ENCODE measurements at regions of chr5 and their contacts with region 1.

Region 1: GRCh38 chr5:98349251-98349995 is 424.0 kb upstream of the RGMB start:
- DNase-seq: peak; percentile 86
- ATAC-seq: peak; percentile 84
- H3K4me3 ChIP-seq: no peak overlapping the region; the same call in 1 of the 2 replicates
- H3K27ac ChIP-seq: peak overlapping the region; percentile 66
- H3K4me1 ChIP-seq: peaks cover 4% of the 10 kb centered on the region; the same call in 1 of the 2 replicates
- H3K27me3 ChIP-seq: no peaks in the 10 kb centered on the region
- CTCF ChIP-seq: peak; percentile 83
- POLR2A ChIP-seq: peak; percentile 47
- RAD21 ChIP-seq: peak; percentile 95

Region 2: DNA sequence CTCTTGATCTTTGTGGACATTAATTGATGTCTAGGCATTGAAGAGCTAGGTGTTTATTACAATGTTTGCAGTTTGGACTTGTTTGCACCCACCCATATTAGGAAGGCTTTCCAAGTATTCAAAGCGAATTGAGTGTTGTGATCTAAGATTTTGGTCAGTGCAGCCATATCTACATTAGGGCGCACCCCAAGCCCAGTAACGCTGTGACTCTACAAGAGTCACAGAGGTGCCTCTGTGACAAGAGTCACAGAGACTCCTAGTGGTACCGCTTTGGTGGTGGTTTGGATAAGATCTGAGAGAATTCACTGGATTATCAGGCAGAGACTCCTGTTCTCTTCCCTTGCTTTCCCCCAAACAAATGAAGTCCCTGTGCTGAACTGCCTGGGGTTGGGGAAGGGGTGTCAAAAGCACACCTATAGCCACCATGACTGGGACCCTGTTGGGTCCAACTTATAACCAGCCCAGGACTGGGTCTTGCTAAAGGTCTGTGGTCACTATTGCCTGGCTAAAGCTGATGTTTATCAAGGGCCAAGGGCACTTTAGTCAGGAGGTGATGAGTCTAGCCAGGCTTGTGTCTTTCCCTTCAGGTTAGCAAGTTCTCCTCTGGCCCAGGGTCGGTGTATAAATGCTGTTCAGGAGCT is 1052.2 kb before region 1 on chr5:
- CTCF ChIA-PET with region 1: no interaction called
- POLR2A ChIA-PET with region 1: no interaction called
- dilution Hi-C with region 1: no loop called
- in situ Hi-C with region 1: no loop called
- intact Hi-C with region 1: loop called (anchors 1 kb)
- DNase-seq: peak; percentile 23
- ATAC-seq: peak; percentile 62
- H3K4me3 ChIP-seq: no peak overlapping the region
- H3K27ac ChIP-seq: no peak overlapping the region
- H3K4me1 ChIP-seq: no peaks in the 10 kb centered on the region; the same call in 1 of the 2 replicates
- H3K27me3 ChIP-seq: no peaks in the 10 kb centered on the region
- CTCF ChIP-seq: peak; percentile 54
- POLR2A ChIP-seq: no peak
- RAD21 ChIP-seq: peak; percentile 59

Region 3: GRCh38 chr5:97534166-97534565 is 815.3 kb before region 1 on chr5:
- CTCF ChIA-PET with region 1: no interaction called
- POLR2A ChIA-PET with region 1: no interaction called
- dilution Hi-C with region 1: no loop called
- in situ Hi-C with region 1: no loop called
- intact Hi-C with region 1: loop called (anchors 1 kb)
- DNase-seq: peak; percentile 94
- ATAC-seq: peak; percentile 98
- H3K4me3 ChIP-seq: no peak overlapping the region
- H3K27ac ChIP-seq: no peak overlapping the region
- H3K4me1 ChIP-seq: no peaks in the 10 kb centered on the region; the same call in 1 of the 2 replicates
- H3K27me3 ChIP-seq: peaks cover 12% of the 10 kb centered on the region
- CTCF ChIP-seq: peak; percentile 72
- POLR2A ChIP-seq: no peak
- RAD21 ChIP-seq: peak; percentile 73

Region 4: GRCh38 chr5:98109561-98110006 is 239.8 kb before region 1 on chr5:
- CTCF ChIA-PET with region 1: no interaction called
- POLR2A ChIA-PET with region 1: no interaction called
- dilution Hi-C with region 1: no loop called
- in situ Hi-C with region 1: no loop called
- intact Hi-C with region 1: loop called (anchors 2 kb)
- DNase-seq: peak; percentile 92
- ATAC-seq: peak; percentile 28
- H3K4me3 ChIP-seq: peak overlapping the region; percentile 3; the same call in 1 of the 2 replicates
- H3K27ac ChIP-seq: peak overlapping the region; percentile 99
- H3K4me1 ChIP-seq: peaks cover 10% of the 10 kb centered on the region
- H3K27me3 ChIP-seq: no peaks in the 10 kb centered on the region
- CTCF ChIP-seq: no peak
- POLR2A ChIP-seq: peak; percentile 77; the same call in 1 of the 2 replicates
- RAD21 ChIP-seq: peak; percentile 20; the same call in 1 of the 2 replicates

Region 5: GRCh38 chr5:98827161-98827560 is 477.7 kb after region 1 on chr5:
- CTCF ChIA-PET with region 1: no interaction called
- POLR2A ChIA-PET with region 1: no interaction called
- dilution Hi-C with region 1: no loop called
- in situ Hi-C with region 1: no loop called
- intact Hi-C with region 1: loop called (anchors 2 kb)
- DNase-seq: peak; percentile 62
- ATAC-seq: peak; percentile 66
- H3K4me3 ChIP-seq: no peak overlapping the region
- H3K27ac ChIP-seq: no peak overlapping the region
- H3K4me1 ChIP-seq: no peaks in the 10 kb centered on the region
- H3K27me3 ChIP-seq: no peaks in the 10 kb centered on the region
- CTCF ChIP-seq: peak; percentile 67
- POLR2A ChIP-seq: no peak; the same call in 1 of the 2 replicates
- RAD21 ChIP-seq: peak; percentile 86

Measured in IMR-90 (cell line).